Common myeloid progenitor, CD34-positive (primary cell): ENCODE measurements at regions of chr3 and their contacts with region 1.

Region 1: DNA sequence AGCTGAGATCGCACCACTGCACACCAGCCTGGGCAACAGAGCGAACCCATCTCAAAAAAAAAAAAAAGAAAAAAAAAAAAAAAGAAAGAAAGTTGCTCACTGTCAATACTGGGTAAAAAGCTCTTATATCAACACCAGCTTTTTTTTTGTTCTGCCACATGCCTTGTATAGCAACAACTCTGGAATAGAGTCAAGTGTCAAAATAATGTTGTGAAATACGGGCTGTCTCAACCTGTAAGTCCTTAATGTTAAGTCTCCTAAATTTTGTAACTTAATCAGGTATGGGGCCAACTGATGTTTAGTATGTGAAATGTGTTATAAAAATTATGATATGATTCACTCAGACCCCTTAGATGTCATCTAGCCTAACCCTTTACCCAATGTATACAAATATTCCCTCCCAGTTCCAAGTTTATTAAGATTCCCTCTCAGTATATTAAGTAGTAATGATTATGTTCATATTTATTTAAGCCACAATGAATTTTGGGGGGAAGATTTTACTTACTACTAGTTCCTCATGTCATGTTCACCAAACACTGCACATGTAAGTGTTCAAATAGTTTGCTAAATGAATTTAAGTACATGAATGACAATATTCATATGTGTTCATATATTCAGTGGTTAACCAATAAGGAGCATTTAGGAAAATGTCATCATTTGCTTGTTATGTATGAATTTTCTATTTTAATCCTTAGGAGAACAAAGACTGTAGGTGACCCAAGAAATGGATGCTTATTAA is 52.2 kb downstream of the GPR160 start:
- DNase-seq: no peak
- H3K4me3 ChIP-seq: no peak overlapping the region
- H3K27ac ChIP-seq: no peak overlapping the region
- H3K4me1 ChIP-seq: no peaks in the 10 kb centered on the region
- H3K27me3 ChIP-seq: no peaks in the 10 kb centered on the region

Region 2: DNA sequence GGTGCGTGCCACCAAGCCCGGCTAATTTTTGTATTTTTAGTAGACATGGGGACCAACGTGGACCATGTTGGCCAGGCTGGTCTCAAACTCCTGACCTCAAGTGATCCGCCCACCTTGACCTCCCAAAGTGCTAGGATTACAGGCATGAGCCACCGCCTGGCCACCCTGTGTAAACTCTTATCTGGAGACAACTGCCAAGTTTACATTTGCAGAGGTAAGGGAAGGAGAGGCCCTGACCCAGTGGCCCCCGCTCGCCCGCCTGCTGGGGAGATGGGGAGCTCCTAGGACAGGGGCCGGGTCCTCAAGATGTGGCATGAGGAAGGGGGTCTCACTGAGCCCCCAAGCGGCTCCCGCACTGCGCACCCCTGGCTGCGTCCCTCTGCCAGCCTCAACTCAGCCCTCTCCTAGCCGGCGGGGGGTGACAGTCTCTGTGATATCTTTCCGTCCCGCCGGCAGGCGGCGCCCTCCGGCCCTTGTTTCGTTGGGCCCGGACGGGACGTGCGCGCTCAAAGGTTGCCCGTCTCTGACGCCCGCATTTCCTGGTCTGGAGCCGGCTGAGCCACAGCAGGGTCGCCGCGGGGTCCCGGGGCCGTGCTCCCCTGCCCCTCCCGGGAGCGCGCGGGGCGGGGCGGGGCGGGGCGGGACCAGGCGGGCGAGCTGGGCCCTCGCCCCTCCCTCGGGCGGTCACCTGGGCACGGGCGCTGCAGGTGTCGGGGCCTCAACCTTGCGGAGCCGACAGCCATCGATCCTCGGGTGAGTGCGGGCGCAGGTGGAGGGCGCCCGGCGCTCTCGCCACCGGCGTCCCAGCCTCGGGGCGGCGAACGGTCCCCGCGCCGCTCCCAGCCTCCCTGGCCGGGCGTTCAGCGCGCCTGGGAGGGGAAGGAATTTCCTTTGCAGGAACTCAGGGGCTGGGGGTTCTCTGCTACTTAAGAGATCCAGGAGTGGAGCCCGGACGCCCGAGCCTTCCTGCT is 52.3 kb before region 1 on chr3 and contains the start of gene GPR160:
- CTCF ChIA-PET with region 1: no interaction called
- POLR2A ChIA-PET with region 1: no interaction called
- DNase-seq: peak; percentile 66 to 82 (median 81)
- H3K4me3 ChIP-seq: peak within 1 kb of the TSS; percentile 62 to 82 (median 72)
- H3K27ac ChIP-seq: no peak within 1 kb of the TSS
- H3K4me1 ChIP-seq: peaks cover 9 to 26% (median 24%) of the 10 kb centered on the region in 4 experiments
- H3K27me3 ChIP-seq: peaks cover 0 to 6% (median 0%) of the 10 kb centered on the region in 5 experiments

Region 3: GRCh38 chr3:170102431-170102830 is 12.4 kb after region 1 on chr3:
- CTCF ChIA-PET with region 1: interaction called, 19 read pairs
- POLR2A ChIA-PET with region 1: no interaction called
- DNase-seq: no peak
- H3K4me3 ChIP-seq: no peak overlapping the region
- H3K27ac ChIP-seq: no peak overlapping the region
- H3K4me1 ChIP-seq: no peaks in the 10 kb centered on the region
- H3K27me3 ChIP-seq: no peaks in the 10 kb centered on the region

Region 4: GRCh38 chr3:170162630-170163029 is 72.6 kb after region 1 on chr3:
- CTCF ChIA-PET with region 1: no interaction called
- POLR2A ChIA-PET with region 1: no interaction called
- DNase-seq: no peak
- H3K4me3 ChIP-seq: no peak overlapping the region
- H3K27ac ChIP-seq: no peak overlapping the region
- H3K4me1 ChIP-seq: no peaks in the 10 kb centered on the region
- H3K27me3 ChIP-seq: no peaks in the 10 kb centered on the region

Region 5: DNA sequence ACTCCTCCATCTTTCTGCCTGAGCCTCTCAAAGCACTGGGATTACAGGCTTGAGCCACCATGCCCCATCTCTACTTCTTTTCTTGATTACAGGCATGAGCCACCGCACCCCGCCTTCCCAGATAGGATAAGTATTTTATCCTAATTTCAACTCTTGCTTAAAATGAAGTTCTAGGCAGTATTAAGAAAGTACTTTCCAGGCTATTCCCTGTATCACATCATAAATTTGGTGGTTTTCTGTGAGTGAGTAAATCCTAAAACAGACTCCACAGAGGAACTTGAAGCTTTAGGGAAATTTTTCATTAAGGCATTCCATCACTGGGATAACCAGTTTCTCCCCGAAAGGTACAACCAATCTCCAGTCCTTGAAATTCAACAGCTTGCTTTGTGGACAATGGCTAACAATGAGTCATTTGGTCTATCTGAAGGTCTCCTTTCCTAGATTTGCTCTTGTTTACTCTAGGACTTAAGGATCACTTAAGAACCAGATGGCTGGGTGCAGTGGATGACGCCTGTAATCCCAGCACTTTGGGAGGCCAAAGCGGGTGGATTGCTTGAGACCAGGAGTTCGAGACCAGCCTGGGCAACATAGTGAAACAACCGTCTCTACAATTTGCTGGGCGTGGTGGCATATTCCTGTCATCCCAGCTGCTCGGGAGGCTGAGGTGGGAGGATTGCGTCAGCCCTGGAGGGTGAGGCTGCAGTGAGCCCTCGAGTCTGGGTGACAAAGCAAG is 217.8 kb after region 1 on chr3:
- CTCF ChIA-PET with region 1: no interaction called
- POLR2A ChIA-PET with region 1: no interaction called
- DNase-seq: no peak
- H3K4me3 ChIP-seq: no peak overlapping the region
- H3K27ac ChIP-seq: no peak overlapping the region
- H3K4me1 ChIP-seq: no peaks in the 10 kb centered on the region
- H3K27me3 ChIP-seq: no peaks in the 10 kb centered on the region